Lower lobe of right lung (tissue), 2 donors: ENCODE measurements at regions of chr14 and their contacts with region 1.

Region 1: GRCh38 chr14:55152052-55152753 is 23.2 kb downstream of the LGALS3 start:
- DNase-seq: no peak
- ATAC-seq: no peak
- H3K4me3 ChIP-seq: no peak overlapping the region
- H3K27ac ChIP-seq: no peak overlapping the region
- H3K4me1 ChIP-seq: no peaks in the 10 kb centered on the region
- H3K27me3 ChIP-seq: no peaks in the 10 kb centered on the region
- CTCF ChIP-seq: no peak

Region 2: DNA sequence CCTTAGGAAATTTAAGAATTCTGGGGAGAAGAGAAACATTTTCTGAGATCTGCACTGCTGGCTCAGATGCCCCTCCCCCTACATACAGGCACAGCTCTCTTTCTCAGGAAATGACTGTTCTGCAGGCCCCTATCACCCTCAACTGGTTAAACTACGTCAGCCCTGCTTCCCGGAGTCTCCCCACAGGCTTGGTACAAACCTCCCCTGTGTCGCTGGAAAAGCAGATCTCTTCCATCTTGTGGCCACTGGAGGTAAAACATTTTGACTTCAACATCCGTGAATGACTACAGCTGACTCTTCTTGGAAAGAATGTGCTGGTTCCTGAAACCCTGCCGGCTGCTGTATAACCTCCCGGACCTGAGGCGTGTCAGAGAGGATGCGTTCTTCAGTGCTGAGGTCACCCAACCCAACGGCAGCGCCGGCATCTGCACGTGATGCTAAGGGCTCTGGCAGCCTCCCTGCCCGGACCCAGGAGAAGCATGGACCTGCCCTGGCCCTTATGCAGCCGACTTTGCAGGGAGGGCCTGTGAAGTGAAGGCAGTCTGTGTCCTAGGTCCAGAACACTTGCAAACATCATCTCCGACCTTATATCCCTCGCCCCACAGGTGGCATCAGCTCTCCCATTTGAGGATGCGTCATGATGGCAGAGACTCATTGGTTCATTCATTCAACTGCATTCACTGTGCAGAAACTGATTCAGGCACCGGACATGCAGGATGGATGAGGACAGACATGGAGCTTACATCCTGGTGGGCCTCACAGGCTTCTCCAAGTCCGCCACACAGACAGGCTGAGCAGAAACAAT is 378.8 kb before region 1 on chr14:
- intact Hi-C with region 1: no loop called
- DNase-seq: peak; percentile 82
- ATAC-seq: peak; percentile 91 to 92
- H3K4me3 ChIP-seq: no peak overlapping the region
- H3K27ac ChIP-seq: peak overlapping the region; percentile 82
- H3K4me1 ChIP-seq: peaks cover 28% of the 10 kb centered on the region
- H3K27me3 ChIP-seq: no peaks in the 10 kb centered on the region
- CTCF ChIP-seq: peak; percentile 57

Region 3: GRCh38 chr14:55097881-55098560 is 54.2 kb before region 1 on chr14:
- intact Hi-C with region 1: loop called (anchors 10 kb)
- DNase-seq: peak; percentile 64
- ATAC-seq: peak; percentile 11 to 45
- H3K4me3 ChIP-seq: no peak overlapping the region
- H3K27ac ChIP-seq: peak overlapping the region; percentile 72
- H3K4me1 ChIP-seq: peaks cover 61% of the 10 kb centered on the region
- H3K27me3 ChIP-seq: no peaks in the 10 kb centered on the region
- CTCF ChIP-seq: no peak